Psoas muscle (tissue), 8 donors: ENCODE measurements at regions of chr5 and their contacts with region 1.

Region 1: DNA sequence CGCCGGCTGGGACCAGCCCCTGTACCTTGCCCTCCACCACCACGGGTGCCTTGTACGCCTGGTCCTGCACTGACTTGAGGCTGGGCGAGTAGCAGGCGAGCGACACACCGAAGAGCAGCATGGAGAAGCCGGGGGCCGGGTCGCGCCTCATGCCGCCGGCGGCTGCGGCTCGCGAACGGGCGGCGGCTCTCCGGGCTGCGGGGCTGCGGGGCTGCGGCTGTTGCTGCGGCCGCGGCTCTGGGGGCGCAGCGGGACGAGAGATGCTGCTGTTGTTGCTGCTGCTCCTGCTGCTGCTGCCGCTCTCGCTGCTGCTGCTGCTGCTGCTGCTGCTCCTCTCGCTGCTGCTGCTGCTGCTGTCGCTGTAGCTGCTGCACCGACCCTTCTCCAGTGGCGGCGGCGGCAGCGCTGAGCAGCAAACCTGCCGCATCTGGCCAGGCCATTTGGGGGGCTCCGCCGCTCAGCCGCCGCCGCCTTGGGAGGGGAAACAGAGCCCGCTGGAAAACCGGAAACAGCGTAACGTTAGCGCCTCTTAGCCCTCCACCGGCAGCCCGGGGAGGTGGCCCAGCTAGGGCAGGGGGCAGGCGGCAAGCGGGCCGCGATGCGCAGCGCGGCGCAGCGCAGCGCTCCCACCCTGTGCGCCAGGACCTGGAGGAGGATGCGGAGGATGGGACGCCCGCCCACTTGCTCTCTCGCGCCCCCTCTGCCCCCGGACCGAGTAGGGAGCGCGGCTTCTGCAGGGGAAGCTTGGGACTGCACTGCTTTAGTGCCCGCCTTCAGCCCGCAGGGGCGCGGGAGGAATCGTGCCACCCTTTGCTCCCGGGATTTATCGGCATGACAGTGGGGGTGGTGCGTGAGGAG is at the start of gene NRG2:
- DNase-seq: peak; percentile 82 to 92
- ATAC-seq: peak; percentile 78 to 84 (median 78)
- H3K4me3 ChIP-seq: peak within 1 kb of the TSS; percentile 80
- H3K27ac ChIP-seq: peak within 1 kb of the TSS; percentile 89
- H3K4me1 ChIP-seq: peaks cover 21% of the 10 kb centered on the region
- H3K27me3 ChIP-seq: peaks cover 0 to 3% (median 0%) of the 10 kb centered on the region in 3 donors
- CTCF ChIP-seq: peak; percentile 61
- total RNA-seq, gene NRG2: 1.7 to 19.6 (median 3.0) TPM

Region 2: GRCh38 chr5:139985733-139986132 is 57.1 kb before region 1 on chr5:
- intact Hi-C with region 1: loop called in 1 of 2 experiments (anchors 5 kb)
- DNase-seq: peak in 1 of 2 donors; percentile 72
- ATAC-seq: peak; percentile 96 to 98 (median 98)
- H3K4me3 ChIP-seq: no peak overlapping the region
- H3K27ac ChIP-seq: peak overlapping the region; percentile 82
- H3K4me1 ChIP-seq: peaks cover 41% of the 10 kb centered on the region
- H3K27me3 ChIP-seq: no peaks in the 10 kb centered on the region
- CTCF ChIP-seq: no peak

Region 3: GRCh38 chr5:140000332-140000731 is 42.5 kb before region 1 on chr5:
- intact Hi-C with region 1: loop called in 1 of 2 experiments (anchors 5 kb)
- DNase-seq: peak in 1 of 2 donors; percentile 60
- ATAC-seq: peak; percentile 56 to 84 (median 72)
- H3K4me3 ChIP-seq: peak overlapping the region; percentile 38
- H3K27ac ChIP-seq: peak overlapping the region; percentile 54
- H3K4me1 ChIP-seq: peaks cover 16% of the 10 kb centered on the region
- H3K27me3 ChIP-seq: no peaks in the 10 kb centered on the region
- CTCF ChIP-seq: no peak

Region 4: GRCh38 chr5:140020601-140021177 is 22.2 kb before region 1 on chr5:
- intact Hi-C with region 1: loop called in 1 of 2 experiments (anchors 2 kb)
- DNase-seq: no peak
- ATAC-seq: peak in 3 of 4 donors; percentile 26 to 54 (median 40)
- H3K4me3 ChIP-seq: no peak overlapping the region
- H3K27ac ChIP-seq: peak overlapping the region; percentile 89
- H3K4me1 ChIP-seq: peaks cover 77% of the 10 kb centered on the region
- H3K27me3 ChIP-seq: no peaks in the 10 kb centered on the region
- CTCF ChIP-seq: no peak

Region 5: GRCh38 chr5:140107312-140108083 is 64.6 kb after region 1 on chr5:
- intact Hi-C with region 1: no loop called
- DNase-seq: peak; percentile 95 to 97
- ATAC-seq: peak; percentile 97 to 98 (median 98)
- H3K4me3 ChIP-seq: peak overlapping the region; percentile 84
- H3K27ac ChIP-seq: peak overlapping the region; percentile 99
- H3K4me1 ChIP-seq: peaks cover 40% of the 10 kb centered on the region
- H3K27me3 ChIP-seq: no peaks in the 10 kb centered on the region
- CTCF ChIP-seq: no peak